ENCODE measurements at regions of chr14 and their contacts with region 1.

Region 1: GRCh38 chr14:102524466-102525218 is 15.1 kb upstream of the ANKRD9 start:
- DNase-seq: peak; percentile 98
- ATAC-seq: peak; percentile 92
- H3K4me3 ChIP-seq: peak overlapping the region; percentile 55 to 74
- H3K27ac ChIP-seq: peak overlapping the region; percentile 86
- H3K4me1 ChIP-seq: peaks cover 27 to 54% of the 10 kb centered on the region in 2 experiments
- H3K27me3 ChIP-seq: no peaks in the 10 kb centered on the region
- CTCF ChIP-seq: peak in 2 of 3 experiments; percentile 96 to 98; a peak in 4 of 6 replicates
- POLR2A ChIP-seq: peak; percentile 82
- RAD21 ChIP-seq: no peak

Region 2: DNA sequence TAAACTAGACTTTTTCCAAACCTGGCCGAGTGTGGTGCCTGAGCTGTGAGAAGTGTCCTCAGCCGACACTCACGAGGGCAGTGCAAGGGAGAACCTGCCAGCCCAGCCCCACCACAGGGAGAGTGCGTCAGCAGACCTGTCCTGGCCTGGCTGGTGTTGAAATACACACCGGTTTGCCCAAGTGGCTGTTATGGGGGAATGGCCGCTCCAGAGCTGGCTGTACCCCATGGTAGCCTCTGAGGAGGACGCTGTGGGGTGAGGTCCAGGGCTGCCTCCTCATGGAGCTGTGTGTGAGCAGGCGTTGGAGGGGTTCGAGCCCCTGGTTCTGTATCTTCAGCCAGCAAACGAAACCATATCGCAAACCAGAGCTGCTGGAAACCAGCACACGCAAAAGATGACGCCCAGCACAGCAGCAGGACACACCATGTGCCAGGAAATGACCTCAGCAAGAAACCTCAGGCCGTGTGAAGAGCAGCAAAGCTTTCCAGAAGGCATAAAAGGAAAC is 24.4 kb before region 1 on chr14:
- CTCF ChIA-PET with region 1: no interaction called
- POLR2A ChIA-PET with region 1: no interaction called
- RAD21 ChIA-PET with region 1: no interaction called
- intact Hi-C with region 1: no loop called
- DNase-seq: no peak
- ATAC-seq: no peak
- H3K4me3 ChIP-seq: no peak overlapping the region
- H3K27ac ChIP-seq: no peak overlapping the region
- H3K4me1 ChIP-seq: no peaks in the 10 kb centered on the region
- H3K27me3 ChIP-seq: no peaks in the 10 kb centered on the region
- CTCF ChIP-seq: no peak
- POLR2A ChIP-seq: no peak
- RAD21 ChIP-seq: no peak

Region 3: GRCh38 chr14:102655170-102655569 is 130.5 kb after region 1 on chr14:
- CTCF ChIA-PET with region 1: interaction called, 4 read pairs
- POLR2A ChIA-PET with region 1: no interaction called
- RAD21 ChIA-PET with region 1: no interaction called
- intact Hi-C with region 1: loop called (anchors 10 kb)
- DNase-seq: no peak
- ATAC-seq: peak; percentile 66
- H3K4me3 ChIP-seq: peak overlapping the region in 1 of 2 experiments; percentile 38; a peak in 2 of 4 replicates
- H3K27ac ChIP-seq: peak overlapping the region; percentile 43; the same call in 1 of the 2 replicates
- H3K4me1 ChIP-seq: peaks cover 17 to 32% of the 10 kb centered on the region in 2 experiments
- H3K27me3 ChIP-seq: no peaks in the 10 kb centered on the region
- CTCF ChIP-seq: no peak
- POLR2A ChIP-seq: no peak
- RAD21 ChIP-seq: no peak

Region 4: GRCh38 chr14:102928412-102929240 is 404.0 kb after region 1 on chr14:
- CTCF ChIA-PET with region 1: no interaction called
- POLR2A ChIA-PET with region 1: no interaction called
- RAD21 ChIA-PET with region 1: no interaction called
- intact Hi-C with region 1: loop called (anchors 10 kb)
- DNase-seq: peak; percentile 52
- ATAC-seq: peak; percentile 83
- H3K4me3 ChIP-seq: peak overlapping the region; percentile 47 to 64
- H3K27ac ChIP-seq: peak overlapping the region; percentile 46; the same call in 1 of the 2 replicates
- H3K4me1 ChIP-seq: peaks cover 22 to 38% of the 10 kb centered on the region in 2 experiments
- H3K27me3 ChIP-seq: no peaks in the 10 kb centered on the region
- CTCF ChIP-seq: no peak
- POLR2A ChIP-seq: no peak
- RAD21 ChIP-seq: no peak

Measured in HCT116 (cell line).